Activated CD4-positive, alpha-beta T cell treated with anti-CD3 and anti-CD28 coated beads for 36 hours (primary cell): ENCODE measurements at regions of chr7 and their contacts with region 1.

Region 1: DNA sequence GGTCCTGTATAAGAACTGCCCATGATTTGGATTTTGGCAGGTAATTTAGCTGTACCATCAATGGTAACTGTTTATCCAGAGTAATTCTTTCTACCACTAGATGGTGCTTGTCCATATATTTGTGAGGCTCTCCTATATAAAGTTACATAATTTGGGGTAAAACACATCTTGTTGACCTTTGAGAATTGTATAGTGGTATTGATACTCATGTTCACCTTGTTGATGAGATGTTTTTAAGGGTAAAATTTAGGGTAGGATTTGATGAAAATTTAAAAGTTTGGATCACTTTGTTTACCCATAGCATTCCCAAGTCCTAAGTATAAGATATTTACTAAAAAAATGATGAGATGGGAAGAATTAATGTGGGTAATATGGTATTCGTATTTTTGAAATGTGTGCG is 31.6 kb downstream of the ST7 start:
- DNase-seq: no peak
- ATAC-seq: peak; percentile 39
- H3K4me3 Mint-ChIP-seq: no peak overlapping the region
- H3K27ac Mint-ChIP-seq: no peak overlapping the region
- H3K4me1 Mint-ChIP-seq: peaks cover 2% of the 10 kb centered on the region
- H3K27me3 Mint-ChIP-seq: no peaks in the 10 kb centered on the region

Region 2: GRCh38 chr7:116543664-116544063 is 441.3 kb before region 1 on chr7:
- CTCF ChIA-PET with region 1: no interaction called
- POLR2A ChIA-PET with region 1: no interaction called
- intact Hi-C with region 1: no loop called
- DNase-seq: no peak
- ATAC-seq: no peak
- H3K4me3 Mint-ChIP-seq: no peak overlapping the region
- H3K27ac Mint-ChIP-seq: no peak overlapping the region
- H3K4me1 Mint-ChIP-seq: no peaks in the 10 kb centered on the region
- H3K27me3 Mint-ChIP-seq: peaks cover 19% of the 10 kb centered on the region

Region 3: DNA sequence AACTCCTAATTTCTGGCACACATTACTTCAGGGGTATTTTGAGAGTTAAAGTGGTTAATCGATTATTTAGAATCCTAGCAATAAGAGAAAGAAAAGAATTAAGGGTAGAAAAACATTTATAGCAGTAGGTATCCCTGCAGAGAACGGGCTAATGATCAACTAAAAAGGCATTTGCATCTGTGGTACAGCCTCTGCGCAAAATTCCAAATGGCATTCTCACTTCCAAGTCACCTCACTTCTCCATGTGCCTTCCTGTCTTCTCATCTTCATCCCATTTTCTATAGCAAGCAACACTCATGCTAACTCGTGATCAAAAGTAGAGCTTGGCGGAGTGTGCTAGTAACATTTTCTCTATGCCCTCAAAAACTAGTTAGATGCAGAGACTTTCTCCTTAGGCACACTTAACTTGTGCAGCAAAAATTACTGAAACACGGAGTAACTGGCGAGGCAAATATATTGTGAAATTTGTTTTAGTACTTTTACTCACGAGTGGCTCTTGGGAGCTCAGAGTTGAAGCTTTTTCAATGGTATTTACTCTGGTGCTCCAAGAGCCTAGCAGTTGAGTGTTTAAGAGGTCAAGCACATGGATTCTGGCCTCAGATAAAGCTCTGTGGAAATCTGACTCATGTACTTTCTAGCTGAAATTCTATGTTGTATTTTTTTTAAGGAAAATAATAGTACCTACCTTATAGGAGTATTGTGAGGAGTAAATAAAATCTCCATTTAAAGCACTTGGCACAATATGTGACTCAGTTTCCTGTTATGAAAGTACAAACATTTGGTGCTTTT is 247.8 kb before region 1 on chr7:
- CTCF ChIA-PET with region 1: no interaction called
- POLR2A ChIA-PET with region 1: no interaction called
- intact Hi-C with region 1: no loop called
- DNase-seq: no peak
- ATAC-seq: no peak
- H3K4me3 Mint-ChIP-seq: no peak overlapping the region
- H3K27ac Mint-ChIP-seq: no peak overlapping the region
- H3K4me1 Mint-ChIP-seq: no peaks in the 10 kb centered on the region
- H3K27me3 Mint-ChIP-seq: peaks cover 13% of the 10 kb centered on the region

Region 4: DNA sequence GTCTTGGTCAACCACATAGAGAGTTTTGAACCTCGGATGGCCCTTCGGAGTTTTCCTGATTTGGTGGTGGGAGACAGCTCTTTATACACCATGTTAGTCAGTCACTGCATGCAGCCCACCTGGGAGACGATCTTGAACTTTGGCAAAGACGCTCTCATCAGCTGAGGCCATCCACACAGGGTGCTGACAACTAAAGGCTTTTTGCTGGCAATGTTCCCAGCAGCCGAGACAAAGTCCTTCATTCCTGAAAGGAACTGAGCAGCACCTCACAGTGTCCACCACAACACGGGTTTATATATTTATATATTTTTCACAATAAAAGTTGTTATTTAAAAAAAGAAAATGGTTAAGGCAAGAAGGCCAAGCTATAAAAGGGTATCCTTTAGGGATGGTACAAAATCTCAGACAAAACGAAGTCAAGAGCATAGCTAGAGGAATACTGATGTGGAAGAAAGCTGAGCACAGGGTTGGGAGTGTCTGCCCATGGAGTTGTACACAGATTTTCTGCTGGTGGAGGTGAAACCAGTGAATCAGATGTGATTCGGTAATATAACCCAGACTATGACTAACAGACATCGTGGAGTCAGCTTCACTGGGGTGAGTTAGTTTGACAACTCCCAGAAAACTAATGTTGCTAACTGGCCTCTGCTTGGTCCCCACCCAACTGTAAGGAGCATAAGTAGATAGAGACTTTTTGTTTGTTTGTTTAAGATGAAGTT is 149.9 kb before region 1 on chr7:
- CTCF ChIA-PET with region 1: no interaction called
- POLR2A ChIA-PET with region 1: no interaction called
- intact Hi-C with region 1: no loop called
- DNase-seq: no peak
- ATAC-seq: peak; percentile 74
- H3K4me3 Mint-ChIP-seq: no peak overlapping the region
- H3K27ac Mint-ChIP-seq: no peak overlapping the region
- H3K4me1 Mint-ChIP-seq: no peaks in the 10 kb centered on the region
- H3K27me3 Mint-ChIP-seq: peaks cover 2% of the 10 kb centered on the region

Region 5: DNA sequence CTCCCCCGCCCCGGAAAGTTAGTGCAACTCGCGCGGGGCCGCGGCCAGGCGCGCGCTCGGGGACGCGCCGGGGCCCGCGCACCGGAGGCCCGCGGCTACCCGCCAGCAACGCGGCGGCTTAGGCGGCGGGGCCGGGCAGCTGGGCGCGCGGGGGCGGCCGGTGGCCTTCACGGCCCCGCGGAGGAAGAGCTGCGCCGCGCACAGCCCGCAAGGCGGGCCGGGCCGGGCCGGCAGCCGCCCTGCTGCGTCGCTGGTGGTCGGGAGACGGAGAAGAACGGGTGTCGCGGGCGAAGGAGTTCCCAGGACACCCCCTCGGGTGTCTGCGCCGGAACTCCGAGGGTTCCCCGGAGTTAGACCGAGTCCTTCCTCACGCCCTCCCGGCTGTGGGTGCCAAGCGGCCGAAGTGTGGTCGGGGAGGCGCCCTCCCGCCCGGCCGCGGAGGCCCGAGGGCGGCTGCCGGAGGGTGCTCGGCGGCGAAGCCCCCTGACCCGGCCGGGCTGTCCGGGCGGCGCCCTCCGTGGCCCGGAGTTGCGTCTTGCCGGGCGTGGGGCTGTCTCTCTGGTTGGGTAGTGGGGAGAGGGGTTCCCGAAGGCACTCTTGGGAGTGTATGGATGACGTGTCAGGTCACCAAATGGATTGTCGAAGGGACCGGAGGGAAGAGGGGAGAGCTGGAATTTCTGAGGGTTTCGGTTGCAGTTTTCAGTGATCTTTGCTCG is 31.0 kb before region 1 on chr7:
- CTCF ChIA-PET with region 1: interaction called, 14 read pairs
- POLR2A ChIA-PET with region 1: no interaction called
- intact Hi-C with region 1: no loop called
- DNase-seq: peak; percentile 43
- ATAC-seq: peak; percentile 54
- H3K4me3 Mint-ChIP-seq: peak overlapping the region; percentile 93
- H3K27ac Mint-ChIP-seq: peak overlapping the region; percentile 97
- H3K4me1 Mint-ChIP-seq: peaks cover 31% of the 10 kb centered on the region
- H3K27me3 Mint-ChIP-seq: no peaks in the 10 kb centered on the region

Region 6: DNA sequence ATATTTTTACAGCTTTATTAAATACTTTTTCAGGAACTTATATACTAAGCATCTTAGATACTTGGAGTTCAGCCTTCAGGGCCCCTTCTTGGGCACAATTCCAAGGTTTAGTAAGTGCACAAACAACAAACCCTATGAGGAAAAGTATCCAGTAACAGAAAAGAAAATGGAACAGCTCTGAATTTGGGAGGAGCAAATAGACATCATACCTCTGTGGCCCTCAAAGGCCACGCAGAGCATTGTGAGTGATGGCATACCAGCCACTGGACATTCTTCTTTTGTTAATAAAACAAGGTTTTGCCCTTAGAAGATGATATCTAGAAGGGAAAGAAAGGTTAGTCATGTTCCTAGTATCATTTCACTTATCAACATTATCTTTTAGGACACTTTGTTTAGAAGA is 14.4 kb after region 1 on chr7:
- CTCF ChIA-PET with region 1: interaction called, 21 read pairs
- POLR2A ChIA-PET with region 1: no interaction called
- intact Hi-C with region 1: no loop called
- DNase-seq: no peak
- ATAC-seq: no peak
- H3K4me3 Mint-ChIP-seq: no peak overlapping the region
- H3K27ac Mint-ChIP-seq: no peak overlapping the region
- H3K4me1 Mint-ChIP-seq: no peaks in the 10 kb centered on the region
- H3K27me3 Mint-ChIP-seq: peaks cover 1% of the 10 kb centered on the region

Region 7: GRCh38 chr7:117014673-117015133 is 29.8 kb after region 1 on chr7:
- CTCF ChIA-PET with region 1: interaction called, 48 read pairs
- POLR2A ChIA-PET with region 1: no interaction called
- intact Hi-C with region 1: loop called in 1 of 2 experiments (anchors 1 kb)
- DNase-seq: peak; percentile 49
- ATAC-seq: no peak
- H3K4me3 Mint-ChIP-seq: no peak overlapping the region
- H3K27ac Mint-ChIP-seq: no peak overlapping the region
- H3K4me1 Mint-ChIP-seq: peaks cover 56% of the 10 kb centered on the region
- H3K27me3 Mint-ChIP-seq: peaks cover 2% of the 10 kb centered on the region

Region 8: DNA sequence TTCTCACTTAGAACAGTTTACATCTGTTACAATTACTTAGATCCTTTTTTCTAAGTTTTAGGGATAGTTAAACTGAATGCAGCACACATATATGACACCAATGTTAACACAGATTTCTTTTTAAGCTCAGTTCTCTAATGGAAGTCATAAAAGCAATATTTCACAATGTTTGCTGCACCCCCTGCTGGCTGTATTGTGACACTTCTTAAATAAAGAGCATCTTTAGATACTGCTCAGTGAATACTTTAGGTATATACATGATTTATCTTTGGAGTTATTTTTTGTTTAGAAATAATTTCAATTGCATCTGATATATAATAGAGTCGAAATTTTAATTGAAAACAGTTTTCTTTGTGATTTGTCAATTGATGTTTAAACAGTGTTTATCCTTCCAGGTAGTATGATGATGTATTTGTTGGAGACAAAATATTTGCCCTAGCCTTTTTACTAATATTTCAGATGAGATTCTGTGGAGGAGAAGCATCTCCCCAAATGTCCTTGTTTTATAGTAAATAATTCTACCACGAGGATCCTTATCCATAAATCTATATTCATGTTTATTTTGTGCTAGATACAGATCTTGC is 142.8 kb after region 1 on chr7:
- CTCF ChIA-PET with region 1: interaction called, 213 read pairs
- POLR2A ChIA-PET with region 1: interaction called, 3 read pairs
- intact Hi-C with region 1: loop called in 1 of 2 experiments (anchors 2 kb)
- DNase-seq: peak; percentile 72
- ATAC-seq: peak; percentile 40
- H3K4me3 Mint-ChIP-seq: no peak overlapping the region
- H3K27ac Mint-ChIP-seq: no peak overlapping the region
- H3K4me1 Mint-ChIP-seq: peaks cover 15% of the 10 kb centered on the region
- H3K27me3 Mint-ChIP-seq: no peaks in the 10 kb centered on the region